Activated CD8-positive, alpha-beta T cell treated with anti-CD3 and anti-CD28 coated beads, Interleukin-2, amount 10 ng/mL, durations not matched to agents 7 days and 5 days (primary cell): ENCODE measurements at regions of chr1 and their contacts with region 1.

Region 1: GRCh38 chr1:19485362-19486187 is at the start of gene CAPZB:
- DNase-seq: peak; percentile 95
- ATAC-seq: peak; percentile 91
- H3K4me3 Mint-ChIP-seq: peak within 1 kb of the TSS; percentile 95
- H3K27ac Mint-ChIP-seq: peak within 1 kb of the TSS; percentile 94
- H3K4me1 Mint-ChIP-seq: peaks cover 55% of the 10 kb centered on the region
- H3K27me3 Mint-ChIP-seq: no peaks in the 10 kb centered on the region
- total RNA-seq, gene CAPZB: 492 to 518 TPM

Region 2: GRCh38 chr1:19460535-19461219 is 24.9 kb before region 1 on chr1:
- CTCF ChIA-PET with region 1: interaction called, 13 read pairs
- POLR2A ChIA-PET with region 1: interaction called, 194 read pairs
- DNase-seq: no peak
- ATAC-seq: no peak
- H3K4me3 Mint-ChIP-seq: no peak overlapping the region
- H3K27ac Mint-ChIP-seq: peak overlapping the region; percentile 53
- H3K4me1 Mint-ChIP-seq: peaks cover 89% of the 10 kb centered on the region
- H3K27me3 Mint-ChIP-seq: no peaks in the 10 kb centered on the region

Region 3: GRCh38 chr1:19582302-19582701 is 96.7 kb after region 1 on chr1:
- CTCF ChIA-PET with region 1: interaction called, 54 read pairs
- POLR2A ChIA-PET with region 1: no interaction called
- DNase-seq: peak; percentile 82
- ATAC-seq: peak; percentile 99
- H3K4me3 Mint-ChIP-seq: no peak overlapping the region
- H3K27ac Mint-ChIP-seq: no peak overlapping the region
- H3K4me1 Mint-ChIP-seq: peaks cover 10% of the 10 kb centered on the region
- H3K27me3 Mint-ChIP-seq: peaks cover 7% of the 10 kb centered on the region

Region 4: DNA sequence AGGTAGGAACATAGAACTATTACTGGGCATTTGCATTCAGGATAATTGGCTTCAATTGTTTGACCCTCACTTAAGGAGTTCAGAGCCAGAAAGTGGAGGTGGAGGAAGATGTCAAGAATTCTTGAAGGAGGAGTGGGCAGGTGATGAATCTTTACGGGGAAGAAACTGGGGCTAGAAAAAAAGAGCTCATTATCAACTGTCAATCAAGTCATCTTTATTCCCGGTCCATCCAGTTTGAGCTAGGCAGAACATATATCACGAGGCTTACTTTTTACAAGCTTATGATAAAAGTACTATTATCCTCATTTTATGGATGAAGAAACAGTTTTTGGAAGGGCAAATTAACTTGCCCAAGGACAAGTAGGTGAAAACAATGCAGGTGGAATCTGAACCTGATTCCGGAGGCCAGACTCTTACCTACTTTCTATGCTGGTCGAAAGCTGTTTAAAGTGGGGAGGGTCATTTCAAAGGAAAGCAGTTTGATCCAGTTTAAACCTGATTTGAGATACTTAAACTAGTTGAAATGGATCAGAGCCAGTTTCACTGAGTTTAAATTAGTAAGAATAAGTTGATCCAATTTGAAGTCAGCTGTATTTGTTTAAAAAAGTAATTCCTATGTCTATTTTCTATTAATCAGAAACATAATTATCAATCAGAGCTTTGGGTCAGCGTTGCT is 145.3 kb after region 1 on chr1:
- CTCF ChIA-PET with region 1: no interaction called
- POLR2A ChIA-PET with region 1: no interaction called
- DNase-seq: no peak
- ATAC-seq: no peak
- H3K4me3 Mint-ChIP-seq: no peak overlapping the region
- H3K27ac Mint-ChIP-seq: no peak overlapping the region
- H3K4me1 Mint-ChIP-seq: no peaks in the 10 kb centered on the region
- H3K27me3 Mint-ChIP-seq: no peaks in the 10 kb centered on the region

Region 5: DNA sequence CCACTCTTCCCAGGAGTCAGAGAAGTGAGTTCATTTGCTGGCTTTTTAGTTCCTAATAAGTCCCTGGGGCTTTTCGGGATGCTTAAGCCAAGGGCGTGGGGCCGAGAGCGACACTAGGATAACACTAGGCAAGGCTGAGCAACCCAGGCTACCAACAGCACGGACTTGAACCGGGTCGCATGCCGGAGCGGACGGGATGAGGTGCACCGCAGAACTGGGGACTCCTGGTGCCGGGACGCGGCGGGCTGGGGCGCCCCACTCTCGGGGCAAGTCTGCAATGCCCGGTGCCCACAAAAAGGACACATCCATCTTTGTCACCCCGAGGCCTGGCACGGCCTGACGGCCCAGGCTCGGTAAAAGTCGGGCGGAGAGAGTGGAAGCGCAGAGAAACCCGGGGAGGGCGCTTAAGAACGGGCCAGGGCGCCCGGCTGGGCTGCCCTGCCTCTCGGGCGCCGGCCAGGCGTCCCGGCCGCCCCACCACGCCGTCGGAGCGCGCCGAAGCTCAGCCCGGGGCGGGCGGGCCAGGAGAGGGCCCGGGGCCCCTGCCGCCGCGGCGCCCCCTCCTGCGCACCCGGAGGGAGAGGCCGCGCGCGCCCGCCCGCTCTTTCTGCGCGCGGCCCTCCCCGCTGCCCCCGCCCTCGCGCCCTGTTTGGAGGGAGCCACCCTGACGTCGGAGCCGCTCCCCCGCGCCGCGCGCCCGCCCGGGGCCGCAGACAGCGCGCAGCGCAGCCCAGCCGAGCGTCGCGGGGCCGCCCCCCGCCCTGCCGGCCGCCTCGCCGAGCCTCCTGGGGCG is 158.2 kb after region 1 on chr1 and contains the start of gene NBL1:
- CTCF ChIA-PET with region 1: interaction called, 19 read pairs
- POLR2A ChIA-PET with region 1: interaction called, 3 read pairs
- DNase-seq: peak; percentile 82
- ATAC-seq: peak; percentile 87
- H3K4me3 Mint-ChIP-seq: peak within 1 kb of the TSS; percentile 93
- H3K27ac Mint-ChIP-seq: peak within 1 kb of the TSS; percentile 93
- H3K4me1 Mint-ChIP-seq: peaks cover 44% of the 10 kb centered on the region
- H3K27me3 Mint-ChIP-seq: peaks cover 14% of the 10 kb centered on the region
- total RNA-seq, gene NBL1: 40.1 TPM